Sciatic nerve (tissue), 2 donors: ENCODE measurements at regions of chr6 and their contacts with region 1.

Region 1: GRCh38 chr6:160455541-160456213 is 107.5 kb downstream of the SLC22A3 start:
- DNase-seq: peak; percentile 80
- ATAC-seq: peak; percentile 88

Region 2: DNA sequence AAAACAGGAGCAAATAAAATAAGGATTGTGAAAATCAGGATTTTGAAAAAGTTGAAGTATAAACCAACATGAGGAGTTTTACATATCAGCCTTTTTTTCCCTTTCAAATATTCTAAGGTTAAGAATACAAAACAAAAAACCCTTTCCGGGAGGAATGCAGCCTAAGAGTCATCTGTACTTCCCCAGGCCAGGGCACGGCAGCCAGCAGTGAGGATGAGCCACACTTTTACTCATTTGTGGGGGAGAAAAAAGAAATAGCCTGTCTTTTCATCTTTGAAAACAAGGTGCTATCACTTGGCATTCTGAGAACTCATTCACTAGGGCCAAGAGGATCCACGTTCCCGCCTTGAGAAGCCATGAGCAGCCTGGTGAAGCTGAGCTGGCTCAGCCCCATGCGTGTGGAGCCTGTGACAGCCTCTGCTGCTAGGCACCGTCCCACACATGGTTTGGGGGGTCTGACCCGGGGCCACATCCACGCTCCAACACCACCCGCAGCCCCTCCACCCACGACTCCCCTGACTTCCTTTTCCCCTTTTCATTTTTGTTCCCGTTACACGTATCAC is 322.8 kb before region 1 on chr6:
- intact Hi-C with region 1: loop called (anchors 5 kb)
- DNase-seq: no peak
- ATAC-seq: peak; percentile 33